ENCODE measurements at regions of chr16 and their contacts with region 1.

Region 1: DNA sequence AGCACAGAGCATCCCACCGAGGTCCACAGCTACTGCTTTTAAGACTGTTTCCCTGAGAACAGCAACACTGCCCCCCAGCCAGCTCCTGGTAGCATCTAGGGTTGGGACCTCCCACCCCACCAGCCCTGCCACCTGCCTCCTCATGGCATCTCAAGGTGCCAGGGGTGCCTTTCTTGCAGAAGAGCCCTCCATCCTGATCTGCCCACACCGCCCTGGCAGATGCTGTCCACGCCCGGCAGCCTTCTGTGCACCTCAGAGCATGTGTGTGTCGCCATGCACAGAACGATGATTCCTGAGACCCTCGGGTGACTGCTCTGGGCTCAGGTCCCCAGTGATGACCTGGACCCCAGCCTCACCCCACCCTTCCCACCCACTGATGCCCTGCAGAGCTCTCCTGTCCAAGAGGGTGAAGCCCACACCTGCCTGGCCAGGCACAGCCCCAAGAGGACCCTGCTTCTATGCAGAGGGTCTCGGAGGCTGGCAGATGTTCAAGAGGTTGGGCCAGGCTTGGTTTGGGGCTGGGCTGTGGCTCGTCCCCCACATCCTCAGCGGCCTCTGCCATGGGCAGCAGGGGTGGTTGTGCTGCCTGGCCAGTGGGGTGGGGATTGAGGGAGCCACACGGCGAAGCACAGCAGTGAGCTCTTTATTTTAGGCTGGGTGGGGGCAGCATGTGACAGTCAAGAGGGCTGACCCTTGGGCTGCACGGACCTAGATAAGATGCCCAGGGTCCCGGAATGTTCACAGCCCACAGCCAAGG is 5.2 kb upstream of the SPATA2L start:
- H3K4me3 ChIP-seq: no peak overlapping the region
- H3K27ac ChIP-seq: no peak overlapping the region
- H3K4me1 ChIP-seq: no peaks in the 10 kb centered on the region; the same call in 1 of the 2 replicates
- CTCF ChIP-seq: no peak

Region 2: GRCh38 chr16:89556750-89557689 is 149.7 kb before region 1 on chr16:
- CTCF ChIA-PET with region 1: no interaction called
- POLR2A ChIA-PET with region 1: no interaction called
- H3K4me3 ChIP-seq: no peak overlapping the region
- H3K27ac ChIP-seq: no peak overlapping the region
- H3K4me1 ChIP-seq: no peaks in the 10 kb centered on the region
- CTCF ChIP-seq: peak; percentile 75

Region 3: GRCh38 chr16:89615596-89616090 is 91.0 kb before region 1 on chr16:
- CTCF ChIA-PET with region 1: no interaction called
- POLR2A ChIA-PET with region 1: no interaction called
- H3K4me3 ChIP-seq: no peak overlapping the region
- H3K27ac ChIP-seq: no peak overlapping the region
- H3K4me1 ChIP-seq: no peaks in the 10 kb centered on the region
- CTCF ChIP-seq: peak; percentile 51

Region 4: DNA sequence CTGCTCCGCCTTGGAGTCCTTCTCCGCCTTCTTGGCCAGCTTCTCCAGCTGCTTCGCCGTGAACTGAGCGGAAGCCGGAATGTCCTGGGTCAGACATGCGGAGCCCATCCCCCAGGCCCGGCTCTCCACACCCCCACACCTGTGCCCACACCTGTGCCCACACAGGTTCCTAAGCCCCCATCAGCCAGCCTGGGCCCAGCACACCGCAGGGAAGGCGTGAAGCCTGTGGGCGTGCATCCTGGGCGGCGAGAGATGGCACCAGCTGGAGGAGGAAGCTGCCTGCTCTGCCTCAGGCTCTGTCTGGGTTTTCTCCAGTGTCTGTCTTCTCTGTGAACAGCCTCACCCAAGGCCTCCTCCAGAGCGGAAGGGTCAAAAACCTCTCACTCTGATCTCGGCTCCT is 55.1 kb before region 1 on chr16:
- CTCF ChIA-PET with region 1: no interaction called
- POLR2A ChIA-PET with region 1: no interaction called
- H3K4me3 ChIP-seq: no peak overlapping the region
- H3K27ac ChIP-seq: no peak overlapping the region
- H3K4me1 ChIP-seq: 0 out of 2 replicates have a peak, but pooled peaks cover 3% of the 10 kb centered on the region
- CTCF ChIP-seq: no peak

Region 5: DNA sequence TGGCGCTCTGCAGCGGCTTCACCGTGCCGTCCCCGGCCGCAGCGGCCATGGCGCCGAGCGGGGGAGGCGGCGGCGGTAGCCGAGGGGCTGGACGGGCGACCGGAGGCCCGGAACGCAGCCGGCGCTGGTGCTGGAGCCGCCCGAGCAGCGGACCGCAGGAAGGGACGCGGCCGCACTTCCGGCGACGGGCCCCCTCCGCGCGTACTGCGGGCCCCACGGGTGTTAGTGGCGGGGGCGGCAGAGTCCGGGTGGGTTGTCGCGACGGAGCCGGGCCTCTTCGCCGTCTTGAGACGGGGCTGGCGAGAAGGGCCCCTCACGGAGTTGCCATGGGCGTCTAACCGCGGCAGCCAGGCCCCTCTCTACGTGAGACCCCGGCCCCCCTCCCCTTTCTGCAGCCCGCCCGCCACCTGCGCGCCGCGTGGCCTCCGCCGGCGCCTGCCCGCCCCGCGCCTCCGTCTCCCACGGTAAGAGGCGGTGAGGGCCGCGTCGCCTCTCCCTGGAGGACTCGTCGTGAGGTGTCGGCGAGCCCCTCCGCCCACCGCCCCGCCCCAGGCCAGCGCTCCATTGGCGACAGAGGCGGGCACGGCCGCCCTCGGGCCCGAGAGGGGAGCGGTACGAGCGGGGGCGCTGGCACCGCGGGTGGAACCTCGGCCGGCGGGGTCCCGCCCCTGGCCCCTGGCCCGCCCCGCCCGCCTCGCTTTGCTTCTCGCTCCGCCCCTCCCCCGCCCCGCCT is 14.3 kb after region 1 on chr16 and contains the starts of genes VPS9D1 and ZNF276:
- CTCF ChIA-PET with region 1: interaction called, 18 read pairs
- POLR2A ChIA-PET with region 1: interaction called, 6 read pairs
- H3K4me3 ChIP-seq: peak within 1 kb of the TSS; percentile 70
- H3K27ac ChIP-seq: peak within 1 kb of the TSS; percentile 84
- H3K4me1 ChIP-seq: peaks cover 5% of the 10 kb centered on the region; the same call in 1 of the 2 replicates
- CTCF ChIP-seq: no peak

Region 6: GRCh38 chr16:89741342-89742014 is 34.8 kb after region 1 on chr16:
- CTCF ChIA-PET with region 1: interaction called, 6 read pairs
- POLR2A ChIA-PET with region 1: interaction called, 10 read pairs
- H3K4me3 ChIP-seq: no peak overlapping the region
- H3K27ac ChIP-seq: no peak overlapping the region
- H3K4me1 ChIP-seq: no peaks in the 10 kb centered on the region
- CTCF ChIP-seq: no peak

Region 7: DNA sequence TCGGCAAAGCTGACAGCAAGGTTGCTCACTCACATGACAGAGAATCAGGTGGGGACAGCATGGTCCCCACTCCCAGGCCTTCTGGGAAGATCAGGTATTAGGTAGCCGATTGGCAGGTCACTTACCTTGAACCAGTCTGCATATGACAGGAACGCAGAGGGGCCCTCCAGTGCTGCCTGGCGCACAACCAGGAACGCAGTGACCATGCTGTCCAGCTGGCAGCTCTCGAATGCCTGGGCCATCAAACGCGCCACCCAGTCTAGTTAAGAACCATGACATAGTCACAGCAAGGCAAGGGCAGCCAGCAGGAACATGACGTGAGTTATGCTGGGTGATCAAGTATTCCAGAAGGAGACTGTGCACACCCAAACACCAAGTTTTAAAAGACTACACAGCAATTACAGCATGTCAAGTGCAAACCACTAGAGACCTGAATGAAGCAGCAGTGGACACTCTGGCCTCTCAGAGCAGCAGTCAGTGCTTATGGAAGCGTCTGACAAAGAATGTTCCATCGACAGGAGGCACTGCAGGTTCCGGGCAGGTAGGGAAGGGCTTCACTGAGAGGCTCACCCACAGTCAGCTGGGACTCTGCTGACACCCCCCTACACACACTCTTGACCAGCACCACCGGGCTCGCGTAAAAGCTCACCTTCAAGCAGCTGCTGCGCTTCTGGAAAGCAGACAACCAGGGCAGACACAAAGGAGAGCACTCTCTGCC is 84.8 kb after region 1 on chr16:
- CTCF ChIA-PET with region 1: interaction called, 12 read pairs
- POLR2A ChIA-PET with region 1: interaction called, 4 read pairs
- H3K4me3 ChIP-seq: no peak overlapping the region
- H3K27ac ChIP-seq: no peak overlapping the region
- H3K4me1 ChIP-seq: no peaks in the 10 kb centered on the region
- CTCF ChIP-seq: no peak

Measured in HEK293 (cell line).